Dendritic cell treated with granulocyte-macrophage colony-stimulating factor and Interleukin-4, amounts not matched to agents 40 ng/mL and 50 ng/mL, for 4 days (primary cell): ENCODE measurements at regions of chr15 and their contacts with region 1.

Region 1: GRCh38 chr15:56174649-56175048 is 69.0 kb downstream of the RFX7 start:
- H3K4me3 Mint-ChIP-seq: no peak overlapping the region
- H3K27ac Mint-ChIP-seq: no peak overlapping the region
- H3K4me1 Mint-ChIP-seq: peaks cover 21% of the 10 kb centered on the region
- H3K27me3 Mint-ChIP-seq: no peaks in the 10 kb centered on the region

Region 2: DNA sequence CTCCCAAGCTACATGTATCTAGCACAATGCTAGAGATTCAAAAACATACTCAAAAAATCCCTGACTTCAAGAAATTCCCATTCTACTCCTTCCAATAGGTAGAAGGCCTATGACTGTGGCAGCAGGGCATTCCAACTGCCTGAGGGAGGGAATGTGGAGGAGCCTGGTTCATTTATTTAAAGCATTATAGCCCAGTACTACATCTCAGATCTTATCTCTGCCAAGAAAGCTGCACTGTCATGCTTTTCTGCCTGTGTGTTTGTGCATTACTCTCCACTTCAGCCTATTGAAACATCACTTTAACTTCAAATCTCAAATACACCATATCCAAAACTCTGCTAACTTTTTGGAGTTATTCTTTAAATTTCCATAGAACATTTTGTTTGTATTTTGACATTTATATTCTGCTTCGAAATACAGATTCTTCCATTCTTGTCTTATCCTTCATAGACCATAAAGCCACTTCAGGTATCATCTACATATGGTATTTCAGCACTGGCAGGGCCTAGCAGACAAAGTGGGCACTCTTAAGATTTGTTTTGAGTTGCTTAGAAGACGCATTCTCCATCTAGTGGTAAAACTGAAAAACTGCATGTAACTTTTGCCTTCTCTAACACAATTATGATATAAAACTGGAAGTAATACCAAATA is 122.1 kb before region 1 on chr15:
- intact Hi-C with region 1: no loop called
- H3K4me3 Mint-ChIP-seq: no peak overlapping the region
- H3K27ac Mint-ChIP-seq: no peak overlapping the region
- H3K4me1 Mint-ChIP-seq: no peaks in the 10 kb centered on the region
- H3K27me3 Mint-ChIP-seq: peaks cover 1% of the 10 kb centered on the region

Region 3: DNA sequence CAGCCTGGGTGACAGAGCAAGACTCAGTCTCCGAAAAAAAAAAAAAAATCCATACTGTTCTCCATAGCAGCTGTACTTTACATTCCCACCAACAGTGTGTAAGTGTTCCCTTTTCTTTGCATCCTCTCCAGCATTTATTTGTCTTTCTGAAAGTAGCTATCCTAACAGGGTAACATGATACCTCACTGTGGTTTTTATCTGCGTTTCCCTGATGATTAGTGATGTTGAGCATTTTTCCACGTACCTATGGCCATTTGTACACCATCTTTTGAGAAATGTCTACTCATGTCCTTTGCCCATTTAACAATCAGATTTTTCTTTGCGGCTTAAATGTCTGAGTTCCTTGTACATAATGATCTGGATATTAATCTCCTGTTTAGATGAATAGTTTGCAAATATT is 50.3 kb before region 1 on chr15:
- intact Hi-C with region 1: loop called (anchors 5 kb)
- H3K4me3 Mint-ChIP-seq: no peak overlapping the region
- H3K27ac Mint-ChIP-seq: no peak overlapping the region
- H3K4me1 Mint-ChIP-seq: no peaks in the 10 kb centered on the region
- H3K27me3 Mint-ChIP-seq: no peaks in the 10 kb centered on the region

Region 4: DNA sequence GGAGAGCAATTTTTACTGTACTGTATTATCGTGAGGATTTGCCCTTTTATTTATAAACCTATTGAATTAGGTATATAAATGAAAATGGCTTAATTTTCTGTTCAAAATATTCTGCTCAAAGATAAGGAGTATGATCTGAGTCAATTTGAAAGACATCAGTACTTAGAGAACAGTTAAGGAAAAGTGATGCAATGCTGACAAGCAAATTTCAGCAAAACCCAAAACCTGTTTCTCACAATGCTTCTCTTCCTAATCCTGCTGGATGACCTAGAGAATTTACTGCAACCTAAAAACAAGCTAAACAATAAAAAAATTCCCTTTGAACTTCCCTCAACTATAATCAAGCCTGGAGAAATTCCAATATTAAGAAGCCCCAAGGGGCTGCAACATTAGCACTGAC is 13.7 kb before region 1 on chr15:
- intact Hi-C with region 1: no loop called
- H3K4me3 Mint-ChIP-seq: no peak overlapping the region
- H3K27ac Mint-ChIP-seq: no peak overlapping the region
- H3K4me1 Mint-ChIP-seq: no peaks in the 10 kb centered on the region
- H3K27me3 Mint-ChIP-seq: no peaks in the 10 kb centered on the region

Region 5: GRCh38 chr15:56261854-56262509 is 87.3 kb after region 1 on chr15:
- intact Hi-C with region 1: no loop called
- H3K4me3 Mint-ChIP-seq: no peak overlapping the region
- H3K27ac Mint-ChIP-seq: no peak overlapping the region
- H3K4me1 Mint-ChIP-seq: no peaks in the 10 kb centered on the region
- H3K27me3 Mint-ChIP-seq: no peaks in the 10 kb centered on the region